SK-N-SH (cell line): ENCODE measurements at regions of chr3 and their contacts with region 1.

Region 1: GRCh38 chr3:139561959-139562676 is 22.6 kb upstream of the RBP1 start:
- DNase-seq: peak; percentile 55
- H3K4me3 ChIP-seq: no peak overlapping the region; a peak in 1 of 4 replicates
- H3K27ac ChIP-seq: no peak overlapping the region
- H3K4me1 ChIP-seq: peaks cover 0 to 16% of the 10 kb centered on the region in 2 experiments; a peak in 2 of 4 replicates
- H3K27me3 ChIP-seq: no peaks in the 10 kb centered on the region
- CTCF ChIP-seq: peak; percentile 74
- EP300 ChIP-seq: no peak
- RAD21 ChIP-seq: peak; percentile 96

Region 2: DNA sequence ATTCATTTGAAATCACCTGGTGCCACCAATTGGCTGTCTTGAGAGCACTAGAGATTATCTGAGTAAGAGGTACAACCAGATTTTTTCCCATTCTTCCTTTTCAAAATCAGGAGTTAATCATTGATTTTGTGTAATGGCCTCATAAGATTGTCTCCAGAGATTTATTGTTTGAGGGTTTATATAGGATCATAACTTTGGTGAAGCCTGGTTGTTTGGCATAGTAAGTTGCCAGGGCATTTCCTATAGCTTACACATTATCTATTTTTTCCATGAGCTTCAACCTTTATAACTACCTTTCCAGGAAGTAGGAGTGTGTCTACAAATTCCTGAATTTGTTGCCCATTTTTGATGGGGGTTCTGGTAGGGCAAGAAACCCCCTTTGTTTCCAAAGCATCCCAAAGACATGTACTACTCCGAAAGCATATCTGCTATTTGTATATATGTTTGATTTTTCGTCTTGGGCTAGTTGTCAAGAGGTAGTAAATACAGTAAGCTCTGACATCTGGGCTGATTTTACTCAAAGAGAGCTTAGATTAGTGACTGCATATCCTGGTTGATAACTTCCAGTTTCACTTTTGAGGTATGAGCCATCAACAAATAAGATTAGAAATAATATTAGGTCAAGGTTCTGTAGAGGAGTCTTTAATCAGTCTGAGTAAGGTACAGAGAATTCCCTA is 529.7 kb before region 1 on chr3:
- CTCF ChIA-PET with region 1: no interaction called
- POLR2A ChIA-PET with region 1: no interaction called
- DNase-seq: no peak
- H3K4me3 ChIP-seq: no peak overlapping the region
- H3K27ac ChIP-seq: no peak overlapping the region
- H3K4me1 ChIP-seq: no peaks in the 10 kb centered on the region
- H3K27me3 ChIP-seq: no peaks in the 10 kb centered on the region
- CTCF ChIP-seq: no peak
- EP300 ChIP-seq: no peak
- RAD21 ChIP-seq: no peak

Region 3: DNA sequence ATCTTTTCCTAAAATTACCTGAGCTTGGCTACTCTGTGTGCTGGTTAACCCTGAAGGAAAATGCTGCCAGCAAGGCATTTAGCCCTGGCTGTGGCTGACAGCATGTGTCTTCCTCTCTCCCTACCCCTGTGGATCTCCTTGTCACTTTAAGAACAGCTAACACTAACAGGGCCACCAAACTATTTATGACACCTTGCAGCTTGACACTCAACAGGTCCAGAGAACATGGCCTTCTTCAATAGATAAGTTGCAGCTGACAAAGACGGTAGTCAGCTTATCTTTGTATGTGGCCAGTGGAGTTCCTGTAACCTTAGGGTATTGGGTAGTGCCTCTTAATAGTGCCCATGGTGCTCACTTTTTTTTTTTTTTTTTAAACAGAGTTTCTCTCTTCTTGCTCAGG is 140.7 kb before region 1 on chr3:
- CTCF ChIA-PET with region 1: interaction called, 141 read pairs
- POLR2A ChIA-PET with region 1: no interaction called
- DNase-seq: no peak
- H3K4me3 ChIP-seq: no peak overlapping the region
- H3K27ac ChIP-seq: no peak overlapping the region
- H3K4me1 ChIP-seq: no peaks in the 10 kb centered on the region
- H3K27me3 ChIP-seq: no peaks in the 10 kb centered on the region
- CTCF ChIP-seq: no peak
- EP300 ChIP-seq: no peak
- RAD21 ChIP-seq: no peak

Region 4: GRCh38 chr3:139434764-139435307 is 127.3 kb before region 1 on chr3:
- CTCF ChIA-PET with region 1: interaction called, 15 read pairs
- POLR2A ChIA-PET with region 1: no interaction called
- DNase-seq: no peak
- H3K4me3 ChIP-seq: no peak overlapping the region
- H3K27ac ChIP-seq: no peak overlapping the region
- H3K4me1 ChIP-seq: peaks cover 0 to 6% of the 10 kb centered on the region in 2 experiments; a peak in 1 of 4 replicates
- H3K27me3 ChIP-seq: no peaks in the 10 kb centered on the region
- CTCF ChIP-seq: no peak
- EP300 ChIP-seq: no peak
- RAD21 ChIP-seq: no peak

Region 5: DNA sequence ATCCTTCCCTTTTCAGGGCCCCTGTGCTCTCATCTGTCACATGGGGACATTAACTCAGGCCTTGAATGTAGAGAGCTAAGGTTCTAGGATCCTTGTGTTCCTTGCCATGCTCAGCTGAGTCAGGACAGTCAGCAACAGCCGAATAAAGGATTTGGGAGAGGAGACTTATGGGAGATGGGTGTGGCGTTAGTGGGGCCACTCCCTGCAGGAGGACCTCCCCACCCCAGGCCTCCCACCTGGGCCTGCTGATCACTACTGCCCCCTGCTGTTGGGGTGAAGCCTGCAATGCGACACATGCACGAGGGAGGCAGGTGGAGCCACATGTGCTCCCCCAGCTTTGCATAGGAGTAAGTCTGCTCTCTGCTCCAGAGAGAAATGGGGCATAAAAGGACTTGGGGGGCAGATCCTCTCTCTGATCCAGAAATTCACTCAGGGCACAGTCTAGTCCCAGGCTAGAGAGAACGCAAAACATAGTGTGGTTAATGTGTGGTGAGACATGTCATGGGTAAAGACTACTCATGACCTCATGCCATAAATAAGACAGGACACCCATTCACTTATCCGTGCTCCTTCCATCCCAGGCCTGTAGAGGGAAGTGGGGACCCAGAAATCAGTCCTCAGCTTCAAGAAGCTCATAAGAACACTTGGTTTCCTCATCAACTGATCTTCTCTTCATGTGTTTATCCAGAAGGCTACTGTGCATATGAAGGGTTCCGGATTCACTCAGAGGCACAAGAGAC is 42.0 kb before region 1 on chr3:
- CTCF ChIA-PET with region 1: interaction called, 16 read pairs
- POLR2A ChIA-PET with region 1: no interaction called
- DNase-seq: no peak
- H3K4me3 ChIP-seq: no peak overlapping the region
- H3K27ac ChIP-seq: no peak overlapping the region; a peak in 1 of 4 replicates
- H3K4me1 ChIP-seq: peaks cover 0 to 16% of the 10 kb centered on the region in 2 experiments; a peak in 1 of 4 replicates
- H3K27me3 ChIP-seq: no peaks in the 10 kb centered on the region
- CTCF ChIP-seq: peak; percentile 18
- EP300 ChIP-seq: no peak
- RAD21 ChIP-seq: peak; percentile 39

Region 6: GRCh38 chr3:139540651-139541151 is 21.4 kb before region 1 on chr3:
- CTCF ChIA-PET with region 1: interaction called, 40 read pairs
- POLR2A ChIA-PET with region 1: no interaction called
- DNase-seq: peak; percentile 46
- H3K4me3 ChIP-seq: peak overlapping the region; percentile 66 to 68; a peak in 3 of 4 replicates
- H3K27ac ChIP-seq: peak overlapping the region in 1 of 2 experiments; percentile 100; a peak in 2 of 4 replicates
- H3K4me1 ChIP-seq: peaks cover 20 to 46% of the 10 kb centered on the region in 2 experiments
- H3K27me3 ChIP-seq: no peaks in the 10 kb centered on the region
- CTCF ChIP-seq: no peak
- EP300 ChIP-seq: no peak
- RAD21 ChIP-seq: no peak